Endothelial cell of umbilical vein (primary cell): ENCODE measurements at regions of chr1 and their contacts with region 1.

Region 1: DNA sequence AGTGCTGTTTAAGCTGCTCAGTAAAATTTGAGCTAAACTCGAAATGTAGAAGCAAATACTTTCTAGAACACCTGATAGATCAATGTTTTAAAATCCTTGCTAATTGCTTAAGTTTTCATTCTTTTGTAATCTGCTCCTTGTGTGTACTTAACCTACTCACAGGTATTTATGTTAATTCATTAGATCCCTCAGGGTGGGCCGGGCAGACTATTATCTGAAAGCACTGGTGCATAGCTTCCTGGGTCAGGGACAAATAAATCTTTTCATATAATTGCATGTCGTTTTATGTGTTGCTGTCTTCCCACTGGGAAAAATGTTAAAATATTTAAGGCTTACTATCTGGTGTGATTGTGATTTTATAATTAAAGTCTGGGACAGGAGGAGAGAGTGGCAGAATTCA is 440.5 kb downstream of the SMYD3 start:
- DNase-seq: no peak
- H3K4me3 ChIP-seq: no peak overlapping the region
- H3K27ac ChIP-seq: no peak overlapping the region
- H3K4me1 ChIP-seq: no peaks in the 10 kb centered on the region
- H3K27me3 ChIP-seq: no peaks in the 10 kb centered on the region
- CTCF ChIP-seq: no peak
- POLR2A ChIP-seq: no peak

Region 2: DNA sequence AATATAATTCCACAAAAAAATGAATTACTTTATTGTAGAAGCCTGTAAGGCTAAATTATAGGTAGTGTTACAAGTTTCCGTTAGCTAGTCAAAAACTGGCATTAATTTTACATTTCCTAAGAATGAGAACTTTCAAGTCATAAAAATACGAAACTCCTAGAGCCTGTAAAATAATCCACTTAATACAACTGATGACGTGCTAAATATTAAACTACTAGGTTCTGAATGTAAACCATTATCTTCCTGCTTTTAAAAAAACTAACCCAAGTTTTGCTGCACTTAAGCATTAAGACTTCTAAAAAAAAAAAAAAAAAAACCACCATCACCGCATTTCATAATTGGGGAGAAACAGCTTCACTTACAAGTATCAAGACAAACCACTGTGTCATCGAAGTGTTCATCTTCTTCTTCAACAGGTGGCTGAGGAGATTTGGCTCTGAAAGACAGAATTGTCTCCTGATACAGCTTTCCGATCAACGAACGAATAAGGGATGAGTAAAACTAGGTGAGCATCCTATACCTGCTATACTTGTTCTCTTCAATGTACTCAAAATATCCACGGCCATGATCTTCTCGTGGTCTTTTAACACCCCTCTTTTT is 1204.4 kb before region 1 on chr1:
- CTCF ChIA-PET with region 1: no interaction called
- POLR2A ChIA-PET with region 1: no interaction called
- dilution Hi-C with region 1: no loop called
- intact Hi-C with region 1: no loop called
- DNase-seq: no peak
- H3K4me3 ChIP-seq: peak overlapping the region; percentile 86 to 97 (median 96)
- H3K27ac ChIP-seq: peak overlapping the region; percentile 81
- H3K4me1 ChIP-seq: peaks cover 30% of the 10 kb centered on the region
- H3K27me3 ChIP-seq: no peaks in the 10 kb centered on the region
- CTCF ChIP-seq: no peak
- POLR2A ChIP-seq: no peak

Region 3: DNA sequence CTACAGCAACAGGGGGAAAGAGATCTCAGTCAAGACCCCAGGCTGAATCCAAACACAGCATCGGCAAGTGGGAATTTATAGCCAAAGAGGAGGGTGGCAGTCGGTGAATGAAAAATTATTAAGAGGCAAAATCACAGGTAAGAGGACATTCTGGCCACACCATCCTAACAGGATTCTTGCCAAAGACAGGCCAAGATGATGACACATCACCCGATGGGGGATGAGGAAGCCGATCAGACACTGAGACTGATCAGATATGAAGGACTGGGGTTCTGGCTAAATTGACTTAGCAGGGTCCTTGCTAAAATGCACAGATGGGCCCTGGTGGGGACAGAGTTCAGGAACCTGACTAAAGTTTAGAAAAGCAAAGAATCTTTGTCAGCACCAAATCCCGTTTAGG is 38.4 kb after region 1 on chr1:
- CTCF ChIA-PET with region 1: no interaction called
- POLR2A ChIA-PET with region 1: no interaction called
- dilution Hi-C with region 1: no loop called
- intact Hi-C with region 1: loop called (anchors 1 kb)
- DNase-seq: no peak
- H3K4me3 ChIP-seq: no peak overlapping the region
- H3K27ac ChIP-seq: no peak overlapping the region
- H3K4me1 ChIP-seq: no peaks in the 10 kb centered on the region
- H3K27me3 ChIP-seq: no peaks in the 10 kb centered on the region
- CTCF ChIP-seq: no peak
- POLR2A ChIP-seq: no peak